Naive thymus-derived CD4-positive, alpha-beta T cell (primary cell): ENCODE measurements at regions of chr17 and their contacts with region 1.

Region 1: GRCh38 chr17:81519284-81519955 is 6.8 kb upstream of the ACTG1 start:
- DNase-seq: peak; percentile 59 to 76 (median 70)
- ATAC-seq: peak; percentile 74
- H3K4me3 ChIP-seq: peak overlapping the region; percentile 51
- H3K4me3 Mint-ChIP-seq: peak overlapping the region in 3 of 10 donors; percentile 57 to 84 (median 57)
- H3K27ac ChIP-seq: peak overlapping the region; percentile 52
- H3K27ac Mint-ChIP-seq: no peak overlapping the region
- H3K4me1 ChIP-seq: peaks cover 0 to 29% of the 10 kb centered on the region in 2 donors
- H3K4me1 Mint-ChIP-seq: peaks cover 8 to 28% (median 23%) of the 10 kb centered on the region in 7 donors
- H3K27me3 ChIP-seq: no peaks in the 10 kb centered on the region
- H3K27me3 Mint-ChIP-seq: peaks cover 0 to 21% (median 0%) of the 10 kb centered on the region in 5 donors

Region 2: GRCh38 chr17:81601525-81602120 is 82.2 kb after region 1 on chr17:
- CTCF ChIA-PET with region 1: interaction called, 18 read pairs
- POLR2A ChIA-PET with region 1: interaction called, 3 read pairs
- intact Hi-C with region 1: loop called (anchors 1 to 2 kb)
- DNase-seq: peak in 8 of 9 donors; percentile 30 to 69 (median 60)
- ATAC-seq: peak; percentile 92
- H3K4me3 ChIP-seq: no peak overlapping the region
- H3K4me3 Mint-ChIP-seq: no peak overlapping the region
- H3K27ac ChIP-seq: no peak overlapping the region
- H3K27ac Mint-ChIP-seq: peak overlapping the region in 3 of 9 donors; percentile 1 to 48 (median 25)
- H3K4me1 ChIP-seq: peaks cover 0 to 6% of the 10 kb centered on the region in 2 donors
- H3K4me1 Mint-ChIP-seq: peaks cover 2 to 14% (median 9%) of the 10 kb centered on the region in 7 donors
- H3K27me3 ChIP-seq: no peaks in the 10 kb centered on the region
- H3K27me3 Mint-ChIP-seq: no peaks in the 10 kb centered on the region